Endothelial cell of umbilical vein (primary cell): ENCODE measurements at regions of chr18 and their contacts with region 1.

Region 1: GRCh38 chr18:830315-830901 is 18.4 kb upstream of the YES1 start:
- DNase-seq: peak; percentile 96
- H3K4me3 ChIP-seq: peak overlapping the region in 1 of 3 experiments; percentile 25
- H3K27ac ChIP-seq: peak overlapping the region; percentile 91
- H3K4me1 ChIP-seq: peaks cover 16% of the 10 kb centered on the region
- H3K27me3 ChIP-seq: no peaks in the 10 kb centered on the region
- CTCF ChIP-seq: no peak
- POLR2A ChIP-seq: peak; percentile 60

Region 2: GRCh38 chr18:525036-525797 is 305.2 kb before region 1 on chr18:
- CTCF ChIA-PET with region 1: no interaction called
- POLR2A ChIA-PET with region 1: no interaction called
- dilution Hi-C with region 1: no loop called
- intact Hi-C with region 1: loop called (anchors 5 kb)
- DNase-seq: peak; percentile 98
- H3K4me3 ChIP-seq: no peak overlapping the region
- H3K27ac ChIP-seq: peak overlapping the region; percentile 98
- H3K4me1 ChIP-seq: peaks cover 37% of the 10 kb centered on the region
- H3K27me3 ChIP-seq: no peaks in the 10 kb centered on the region
- CTCF ChIP-seq: no peak
- POLR2A ChIP-seq: peak; percentile 74

Region 3: DNA sequence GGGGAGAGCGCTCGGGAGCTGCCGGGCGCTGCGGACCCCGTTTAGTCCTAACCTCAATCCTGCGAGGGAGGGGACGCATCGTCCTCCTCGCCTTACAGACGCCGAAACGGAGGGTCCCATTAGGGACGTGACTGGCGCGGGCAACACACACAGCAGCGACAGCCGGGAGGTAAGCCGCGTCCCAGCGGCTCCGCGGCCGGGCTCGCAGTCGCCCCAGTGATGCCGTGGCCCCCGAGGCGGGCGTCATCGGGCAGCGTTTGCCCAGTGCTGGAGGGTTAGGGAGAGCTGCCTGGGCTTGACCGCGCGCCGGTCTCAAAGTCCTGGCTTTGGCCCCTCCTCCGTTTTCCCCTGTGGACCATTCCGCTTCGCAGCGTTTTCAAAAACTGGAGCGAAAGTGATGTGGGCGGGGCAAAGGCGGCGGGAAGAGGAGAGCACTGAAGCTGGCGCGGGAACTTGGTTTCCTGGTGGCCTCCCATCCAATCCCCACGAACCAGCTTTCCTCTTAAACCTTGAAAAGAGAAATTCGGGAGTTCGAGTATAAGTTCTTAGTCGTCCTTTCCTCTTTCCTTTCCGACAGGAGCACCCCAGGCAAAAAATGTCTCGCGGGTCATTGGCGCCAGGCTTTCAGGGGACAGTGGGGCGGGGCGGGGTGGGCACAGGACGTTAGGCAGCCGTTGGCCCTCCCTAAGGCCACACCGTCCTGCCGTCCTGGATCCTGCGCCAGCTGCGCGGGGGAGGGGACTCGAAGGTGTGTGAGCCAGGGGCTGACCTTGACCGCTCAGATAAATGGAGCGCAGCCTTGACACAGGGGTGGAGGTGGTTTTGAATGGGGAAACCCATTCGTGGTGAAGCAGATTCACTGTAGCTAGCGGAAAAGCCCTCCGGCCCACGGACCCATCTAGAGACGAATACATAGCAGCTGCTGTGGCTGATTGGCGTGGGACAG is 172.1 kb before region 1 on chr18:
- CTCF ChIA-PET with region 1: interaction called, 16 read pairs
- POLR2A ChIA-PET with region 1: no interaction called
- dilution Hi-C with region 1: no loop called
- intact Hi-C with region 1: loop called (anchors 10 kb)
- DNase-seq: peak; percentile 93
- H3K4me3 ChIP-seq: peak overlapping the region; percentile 70 to 88 (median 82)
- H3K27ac ChIP-seq: peak overlapping the region; percentile 46
- H3K4me1 ChIP-seq: peaks cover 10% of the 10 kb centered on the region
- H3K27me3 ChIP-seq: no peaks in the 10 kb centered on the region
- CTCF ChIP-seq: no peak
- POLR2A ChIP-seq: peak; percentile 74

Region 4: DNA sequence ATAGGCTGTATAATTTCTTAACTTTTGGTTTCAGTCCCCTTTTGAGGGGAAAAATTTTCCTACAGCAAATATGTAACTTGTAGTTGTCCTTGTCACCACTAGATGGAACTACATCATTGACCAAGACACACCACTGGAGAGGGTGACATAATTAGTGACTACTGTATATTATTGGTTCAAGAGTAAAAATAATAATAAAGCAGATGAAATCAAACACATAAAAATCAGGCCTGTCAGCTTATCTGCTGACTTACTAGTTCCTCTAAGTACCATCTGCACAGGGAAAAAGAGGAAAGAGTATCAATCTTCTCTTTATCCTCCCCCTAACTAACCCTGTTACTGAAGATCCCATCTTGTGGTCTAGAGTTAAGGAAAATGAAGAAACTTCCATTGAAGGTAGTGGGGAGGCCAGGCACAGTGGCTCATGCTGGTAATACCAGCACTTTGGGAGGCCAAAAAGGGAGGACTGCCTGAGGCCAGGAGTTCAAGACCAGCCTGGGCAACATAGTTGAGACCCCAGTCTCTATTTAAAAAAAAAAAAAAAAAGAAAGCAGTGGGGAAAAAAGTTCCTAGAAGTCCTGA is 88.4 kb before region 1 on chr18:
- CTCF ChIA-PET with region 1: interaction called, 301 read pairs
- POLR2A ChIA-PET with region 1: interaction called, 5 read pairs
- dilution Hi-C with region 1: loop called (anchors 25 kb)
- intact Hi-C with region 1: loop called (anchors 1 kb)
- DNase-seq: peak; percentile 78
- H3K4me3 ChIP-seq: no peak overlapping the region
- H3K27ac ChIP-seq: peak overlapping the region; percentile 9
- H3K4me1 ChIP-seq: peaks cover 19% of the 10 kb centered on the region
- H3K27me3 ChIP-seq: no peaks in the 10 kb centered on the region
- CTCF ChIP-seq: peak; percentile 46 to 51
- POLR2A ChIP-seq: no peak

Region 5: DNA sequence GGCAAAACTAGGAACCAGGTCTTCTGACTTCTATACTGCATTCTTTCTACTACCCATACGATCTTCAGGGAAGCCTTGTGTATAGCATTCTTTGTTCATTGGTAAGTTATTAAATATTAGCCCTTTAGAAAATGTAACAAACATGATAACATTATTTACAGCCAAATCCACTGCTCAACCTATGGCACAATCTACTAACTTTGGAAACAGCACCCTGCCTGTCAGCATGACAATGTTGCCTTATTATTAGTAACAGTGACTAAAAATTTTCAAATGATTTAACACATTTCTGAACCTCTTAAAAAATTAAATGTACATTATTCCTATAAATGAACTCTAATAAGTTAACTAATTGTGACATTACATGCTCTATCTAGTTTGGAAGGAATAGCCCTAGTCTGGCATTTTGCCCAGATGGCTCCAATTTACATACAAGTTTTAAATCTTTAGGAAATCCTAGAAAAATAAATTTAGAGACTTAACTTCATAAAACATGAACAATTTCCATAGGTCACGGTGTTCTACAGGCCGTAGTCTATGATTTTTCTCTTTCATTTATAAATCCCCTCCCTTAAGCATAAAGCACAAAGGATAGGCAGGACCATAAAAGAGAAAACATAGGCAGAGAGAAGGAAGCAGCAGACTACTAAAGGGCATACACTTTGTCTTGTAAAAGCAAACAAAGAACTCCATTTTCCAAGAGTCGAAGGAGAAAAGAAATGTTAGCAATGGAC is 52.0 kb before region 1 on chr18:
- CTCF ChIA-PET with region 1: interaction called, 17 read pairs
- POLR2A ChIA-PET with region 1: no interaction called
- dilution Hi-C with region 1: no loop called
- intact Hi-C with region 1: loop called (anchors 2 kb)
- DNase-seq: peak; percentile 76
- H3K4me3 ChIP-seq: peak overlapping the region in 1 of 3 experiments; percentile 13
- H3K27ac ChIP-seq: peak overlapping the region; percentile 10
- H3K4me1 ChIP-seq: peaks cover 41% of the 10 kb centered on the region
- H3K27me3 ChIP-seq: no peaks in the 10 kb centered on the region
- CTCF ChIP-seq: no peak
- POLR2A ChIP-seq: no peak

Region 6: GRCh38 chr18:812376-813171 is 17.8 kb before region 1 on chr18:
- CTCF ChIA-PET with region 1: interaction called, 138 read pairs
- POLR2A ChIA-PET with region 1: interaction called, 9 read pairs
- dilution Hi-C with region 1: no loop called
- intact Hi-C with region 1: loop called (anchors 1 kb)
- DNase-seq: peak; percentile 88
- H3K4me3 ChIP-seq: peak overlapping the region; percentile 80 to 100 (median 99)
- H3K27ac ChIP-seq: peak overlapping the region; percentile 90
- H3K4me1 ChIP-seq: peaks cover 49% of the 10 kb centered on the region
- H3K27me3 ChIP-seq: no peaks in the 10 kb centered on the region
- CTCF ChIP-seq: no peak
- POLR2A ChIP-seq: no peak

Region 7: GRCh38 chr18:877238-877637 is 46.8 kb after region 1 on chr18:
- CTCF ChIA-PET with region 1: no interaction called
- POLR2A ChIA-PET with region 1: no interaction called
- dilution Hi-C with region 1: no loop called
- intact Hi-C with region 1: no loop called
- DNase-seq: no peak
- H3K4me3 ChIP-seq: no peak overlapping the region
- H3K27ac ChIP-seq: no peak overlapping the region
- H3K4me1 ChIP-seq: no peaks in the 10 kb centered on the region
- H3K27me3 ChIP-seq: peaks cover 0 to 4% of the 10 kb centered on the region in 2 experiments
- CTCF ChIP-seq: no peak
- POLR2A ChIP-seq: no peak

Region 8: DNA sequence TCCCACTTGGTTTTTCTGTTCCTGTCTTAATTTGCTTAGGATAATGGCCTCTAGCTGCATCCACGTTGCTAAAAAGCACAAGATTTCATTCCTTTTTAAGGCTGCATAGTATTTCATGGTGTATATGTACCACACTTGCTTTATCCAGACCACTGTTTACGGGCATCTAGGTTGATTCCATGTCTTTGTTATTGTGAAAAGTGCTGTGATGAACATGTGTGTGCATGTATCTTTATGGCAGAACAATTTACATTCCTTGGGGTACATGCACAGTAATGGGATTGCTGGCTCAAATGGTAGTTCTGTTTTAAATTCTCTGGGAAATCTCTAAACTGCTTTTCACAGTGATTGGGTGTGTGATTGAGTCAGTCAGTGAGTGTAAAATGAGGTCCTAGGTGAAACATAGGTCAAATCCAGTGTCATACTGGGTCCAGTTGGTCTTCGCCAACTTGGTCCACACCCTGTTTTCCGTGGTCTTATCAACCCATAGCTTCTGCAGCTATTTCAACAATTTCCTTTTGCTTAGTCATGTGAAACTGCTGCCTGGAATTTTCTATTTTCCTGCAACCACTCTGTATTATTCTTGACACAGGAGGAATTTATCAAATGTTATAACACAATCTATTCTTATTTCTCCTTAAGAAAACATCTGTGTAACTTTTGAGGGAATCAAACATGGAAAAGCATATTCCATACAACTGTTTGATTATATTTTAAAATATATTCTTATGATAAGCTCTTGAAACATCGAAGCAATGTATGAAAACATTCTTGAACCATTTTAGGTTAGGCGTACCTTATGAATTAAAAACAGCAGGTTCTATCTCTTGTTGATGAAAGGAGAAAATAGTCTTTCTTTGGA is 157.1 kb after region 1 on chr18:
- CTCF ChIA-PET with region 1: no interaction called
- POLR2A ChIA-PET with region 1: no interaction called
- dilution Hi-C with region 1: no loop called
- intact Hi-C with region 1: no loop called
- DNase-seq: peak; percentile 90
- H3K4me3 ChIP-seq: no peak overlapping the region
- H3K27ac ChIP-seq: peak overlapping the region; percentile 65
- H3K4me1 ChIP-seq: peaks cover 23% of the 10 kb centered on the region
- H3K27me3 ChIP-seq: no peaks in the 10 kb centered on the region
- CTCF ChIP-seq: no peak
- POLR2A ChIP-seq: peak; percentile 34